GM12878 (cell line): ENCODE measurements at regions of chr1 and their contacts with region 1.

Region 1: DNA sequence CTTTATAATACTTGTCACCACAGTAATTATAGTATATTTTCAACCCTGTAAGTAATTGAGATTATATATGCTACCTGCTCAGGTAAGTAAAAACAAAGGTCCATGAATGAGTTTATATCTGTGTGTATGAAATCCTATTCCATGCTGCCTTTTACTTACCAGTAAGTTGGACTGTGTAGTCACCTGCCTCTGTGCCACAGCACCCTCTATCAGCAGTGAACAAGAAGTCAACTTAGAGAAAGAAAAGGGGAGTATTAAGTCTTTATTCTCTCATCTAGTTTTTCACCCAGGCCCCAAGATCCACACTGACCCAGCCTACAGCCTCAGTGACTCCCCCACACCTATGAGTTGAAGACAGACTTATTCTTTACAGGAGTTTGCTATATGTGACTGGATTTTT is 36.9 kb upstream of the IFI16 start:
- DNase-seq: no peak
- ATAC-seq: peak; percentile 75
- H3K4me3 ChIP-seq: no peak overlapping the region
- H3K27ac ChIP-seq: no peak overlapping the region
- H3K4me1 ChIP-seq: no peaks in the 10 kb centered on the region
- H3K27me3 ChIP-seq: no peaks in the 10 kb centered on the region; a peak in 1 of 4 replicates
- CTCF ChIP-seq: peak in 2 of 3 experiments; percentile 38 to 52; a peak in 5 of 6 replicates
- EP300 ChIP-seq: no peak
- POLR2A ChIP-seq: no peak
- RAD21 ChIP-seq: peak; percentile 64

Region 2: DNA sequence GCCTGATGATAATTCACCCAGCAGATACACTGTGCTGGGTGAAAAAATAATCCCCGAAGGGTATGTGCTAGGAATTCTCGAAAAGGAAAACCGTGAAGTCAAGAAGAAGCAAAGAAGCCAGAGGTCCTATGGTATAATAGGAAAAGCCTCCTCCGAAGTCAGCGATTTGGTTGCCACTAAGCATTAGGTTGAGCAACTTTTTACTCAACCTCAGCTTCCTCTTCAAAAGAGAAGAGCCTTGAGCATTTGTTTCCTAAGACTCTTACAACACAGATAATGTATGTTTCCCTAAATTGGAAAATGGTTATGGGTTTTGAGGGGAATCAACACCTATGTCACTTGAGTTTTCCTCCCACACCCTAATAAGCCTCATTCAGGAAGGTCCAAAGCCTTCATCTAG is 163.0 kb before region 1 on chr1:
- CTCF ChIA-PET with region 1: no interaction called
- POLR2A ChIA-PET with region 1: no interaction called
- RAD21 ChIA-PET with region 1: no interaction called
- SMC1A ChIA-PET with region 1: no interaction called
- in situ Hi-C with region 1: no loop called
- intact Hi-C with region 1: loop called (anchors 10 kb)
- DNase-seq: no peak
- ATAC-seq: no peak
- H3K4me3 ChIP-seq: no peak overlapping the region
- H3K27ac ChIP-seq: no peak overlapping the region
- H3K4me1 ChIP-seq: no peaks in the 10 kb centered on the region
- H3K27me3 ChIP-seq: no peaks in the 10 kb centered on the region
- CTCF ChIP-seq: no peak
- EP300 ChIP-seq: no peak
- POLR2A ChIP-seq: no peak
- RAD21 ChIP-seq: no peak

Region 3: DNA sequence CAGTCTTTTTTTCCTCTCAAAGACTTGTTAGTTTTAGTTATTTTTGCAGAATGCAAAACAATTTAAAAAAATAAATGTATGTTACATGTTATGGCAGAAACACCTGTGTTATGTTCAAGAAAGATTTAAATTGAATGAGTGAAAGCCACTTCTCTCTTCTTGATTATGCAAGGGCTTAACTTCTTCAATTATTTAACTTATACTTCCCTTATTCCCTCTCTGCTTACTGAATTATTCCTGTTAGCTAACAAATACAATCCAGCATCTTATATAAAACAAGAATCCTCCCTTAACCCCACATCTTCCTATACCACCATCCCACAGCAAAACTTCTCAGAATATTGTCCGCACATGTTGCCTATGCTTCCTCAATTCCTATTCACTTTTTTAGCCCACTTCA is 318.6 kb after region 1 on chr1:
- CTCF ChIA-PET with region 1: no interaction called
- POLR2A ChIA-PET with region 1: no interaction called
- RAD21 ChIA-PET with region 1: no interaction called
- SMC1A ChIA-PET with region 1: no interaction called
- in situ Hi-C with region 1: no loop called
- intact Hi-C with region 1: no loop called
- DNase-seq: no peak
- ATAC-seq: no peak
- H3K4me3 ChIP-seq: no peak overlapping the region
- H3K27ac ChIP-seq: no peak overlapping the region
- H3K4me1 ChIP-seq: no peaks in the 10 kb centered on the region
- H3K27me3 ChIP-seq: no peaks in the 10 kb centered on the region
- CTCF ChIP-seq: no peak
- EP300 ChIP-seq: no peak
- POLR2A ChIP-seq: no peak
- RAD21 ChIP-seq: no peak